Cardiac septum (tissue), 1 donor: ENCODE measurements at regions of chr4 and their contacts with region 1.

Region 1: DNA sequence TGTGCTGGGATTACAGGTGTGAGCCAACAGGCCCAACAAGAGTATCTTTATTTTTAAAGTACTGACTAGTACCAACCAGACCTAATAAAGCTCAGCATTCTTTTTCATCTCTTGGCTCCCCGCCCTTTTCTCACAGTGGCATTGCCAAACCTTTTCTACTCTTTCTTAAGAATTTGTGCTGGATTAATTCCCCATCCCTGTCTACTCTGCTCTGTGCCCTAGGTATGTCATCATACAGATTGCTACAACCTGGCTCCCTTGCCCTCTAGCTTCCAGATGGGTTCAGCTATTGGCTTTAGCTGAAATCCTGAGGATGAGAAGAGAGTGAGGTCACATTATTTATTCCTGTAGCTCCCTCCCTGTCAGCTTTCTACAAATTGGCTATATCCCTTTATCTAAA is 34.9 kb upstream of the CCNI start:
- DNase-seq: no peak

Region 2: DNA sequence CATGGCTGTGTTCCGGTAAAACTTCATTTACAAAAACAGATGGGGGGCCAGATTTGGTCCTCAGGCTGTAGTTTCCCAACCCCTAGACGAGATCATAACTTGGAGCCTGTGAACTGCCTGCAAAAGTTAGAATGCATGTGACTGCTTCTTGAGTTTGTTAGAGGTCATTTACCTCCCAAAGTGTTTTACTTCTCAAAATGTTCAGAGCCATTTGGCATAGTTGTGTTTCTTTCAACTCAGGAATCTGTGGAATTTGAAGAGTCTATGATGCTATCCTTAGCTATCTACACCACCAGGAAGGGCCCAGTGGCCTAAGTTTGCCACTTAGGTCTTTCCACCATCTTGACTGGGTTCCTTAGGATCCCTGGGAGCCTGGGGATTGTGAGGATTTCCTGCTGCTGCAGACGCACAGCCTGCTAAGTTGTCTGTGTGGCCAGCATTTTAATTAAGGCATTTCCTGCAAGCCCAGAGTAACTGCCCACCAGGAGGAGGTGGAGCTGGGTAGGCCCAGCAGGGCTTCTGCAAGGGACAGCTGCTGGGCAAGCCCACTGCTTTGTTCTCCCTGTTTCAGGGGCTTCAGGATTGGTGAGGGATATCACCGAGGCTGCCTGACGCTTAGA is 88.1 kb before region 1 on chr4:
- intact Hi-C with region 1: no loop called
- DNase-seq: no peak

Region 3: DNA sequence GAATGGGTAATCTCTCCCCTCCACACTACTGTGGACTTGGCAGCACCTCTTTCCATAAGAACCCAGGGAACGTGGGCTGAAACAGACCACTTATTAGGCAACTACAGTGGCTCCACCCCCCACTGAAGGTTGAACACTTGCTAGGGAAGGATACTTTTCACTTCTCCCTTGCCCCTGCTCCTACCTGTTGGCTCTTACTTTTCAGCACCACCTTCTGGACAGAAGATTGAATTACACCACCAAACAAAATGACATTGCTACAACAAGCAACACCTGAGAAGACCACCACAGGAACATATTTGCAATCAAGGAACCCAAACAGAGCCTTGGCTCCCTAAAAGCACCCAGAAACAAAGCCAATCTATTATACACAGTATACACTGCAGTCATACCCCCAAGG is 362.8 kb after region 1 on chr4:
- intact Hi-C with region 1: loop called (anchors 10 kb)
- DNase-seq: no peak